ENCODE measurements at regions of chr5 and their contacts with region 1.

Region 1: DNA sequence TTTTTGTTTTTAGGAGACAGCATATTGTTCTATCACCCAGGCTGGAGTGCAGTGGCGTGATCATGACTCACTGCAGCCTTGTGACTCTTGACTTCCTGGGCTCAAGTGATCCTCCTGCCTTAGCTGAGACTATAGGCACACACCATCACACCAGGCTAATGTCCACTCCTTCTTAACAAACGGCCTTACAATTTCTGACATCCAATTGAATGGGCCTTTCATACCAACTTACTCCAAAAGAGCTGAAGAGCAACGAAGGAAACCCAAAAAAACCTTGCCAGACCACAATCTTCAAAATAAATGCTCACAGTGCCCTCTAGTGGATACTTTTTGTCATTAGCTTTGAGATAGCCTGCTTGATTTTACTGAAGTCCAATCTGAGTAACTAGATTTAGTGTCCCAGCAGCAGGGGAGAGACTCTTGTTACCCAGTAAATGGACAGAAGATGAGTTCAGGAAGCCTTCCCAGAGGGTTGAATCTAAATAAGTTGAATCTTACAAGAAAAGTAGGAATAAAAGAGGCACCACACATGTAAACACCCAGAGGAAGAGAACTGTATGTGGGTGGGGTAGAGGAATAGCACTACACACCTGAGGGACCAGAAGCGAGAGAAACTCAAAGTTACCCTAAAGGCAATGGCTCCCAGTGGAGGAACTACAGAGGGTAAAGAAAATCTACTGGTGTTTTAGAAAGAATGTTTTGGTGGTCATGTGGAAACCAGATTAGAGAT is 9.3 kb downstream of the ZNF622 start:
- DNase-seq: peak; percentile 46

Region 2: DNA sequence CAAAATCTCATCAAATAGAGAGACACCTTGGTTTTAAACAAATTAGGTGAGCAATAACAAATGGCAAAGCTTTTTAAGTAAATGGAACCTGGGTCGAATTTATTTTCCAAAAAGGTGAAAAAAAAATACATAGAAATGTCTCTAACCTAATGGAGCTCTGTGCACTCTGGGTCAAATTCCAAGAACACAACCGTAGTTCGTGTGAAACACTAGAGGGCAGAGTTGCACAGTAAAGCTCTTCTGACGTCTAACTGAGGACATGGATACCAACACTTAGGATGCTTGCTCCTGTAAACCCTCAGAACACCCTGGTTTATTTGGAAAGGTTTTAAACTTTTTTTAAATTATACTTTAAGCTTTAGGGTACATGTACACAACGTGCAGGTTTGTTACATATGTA is 295.6 kb before region 1 on chr5:
- CTCF ChIA-PET with region 1: interaction called, 35 read pairs
- POLR2A ChIA-PET with region 1: interaction called, 3 read pairs
- DNase-seq: peak; percentile 57

Region 3: DNA sequence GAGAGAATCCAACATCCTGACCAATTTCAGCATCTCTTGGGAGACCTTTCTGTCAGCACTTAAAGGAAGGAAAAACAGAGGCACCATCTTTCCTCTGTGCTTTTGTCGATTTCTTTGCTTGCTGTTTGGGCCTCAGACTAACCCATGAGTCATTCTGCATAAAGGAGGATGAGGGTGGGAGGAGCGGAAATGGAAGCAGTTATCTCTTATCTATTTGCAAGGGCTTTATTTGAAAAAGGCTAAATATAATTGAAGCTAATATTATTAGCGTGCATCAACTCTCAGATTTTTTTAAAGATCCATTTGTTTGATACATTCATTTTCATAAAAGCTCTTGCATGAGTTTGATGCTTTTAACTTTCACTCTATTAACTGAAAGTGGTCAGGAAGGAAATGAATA is 63.5 kb before region 1 on chr5:
- CTCF ChIA-PET with region 1: no interaction called
- POLR2A ChIA-PET with region 1: no interaction called
- DNase-seq: no peak

Region 4: GRCh38 chr5:16477541-16477940 is 21.3 kb after region 1 on chr5:
- CTCF ChIA-PET with region 1: no interaction called
- POLR2A ChIA-PET with region 1: no interaction called
- DNase-seq: no peak

Measured in HEK293T (cell line).